ENCODE measurements at regions of chr9 and their contacts with region 1.

Region 1: DNA sequence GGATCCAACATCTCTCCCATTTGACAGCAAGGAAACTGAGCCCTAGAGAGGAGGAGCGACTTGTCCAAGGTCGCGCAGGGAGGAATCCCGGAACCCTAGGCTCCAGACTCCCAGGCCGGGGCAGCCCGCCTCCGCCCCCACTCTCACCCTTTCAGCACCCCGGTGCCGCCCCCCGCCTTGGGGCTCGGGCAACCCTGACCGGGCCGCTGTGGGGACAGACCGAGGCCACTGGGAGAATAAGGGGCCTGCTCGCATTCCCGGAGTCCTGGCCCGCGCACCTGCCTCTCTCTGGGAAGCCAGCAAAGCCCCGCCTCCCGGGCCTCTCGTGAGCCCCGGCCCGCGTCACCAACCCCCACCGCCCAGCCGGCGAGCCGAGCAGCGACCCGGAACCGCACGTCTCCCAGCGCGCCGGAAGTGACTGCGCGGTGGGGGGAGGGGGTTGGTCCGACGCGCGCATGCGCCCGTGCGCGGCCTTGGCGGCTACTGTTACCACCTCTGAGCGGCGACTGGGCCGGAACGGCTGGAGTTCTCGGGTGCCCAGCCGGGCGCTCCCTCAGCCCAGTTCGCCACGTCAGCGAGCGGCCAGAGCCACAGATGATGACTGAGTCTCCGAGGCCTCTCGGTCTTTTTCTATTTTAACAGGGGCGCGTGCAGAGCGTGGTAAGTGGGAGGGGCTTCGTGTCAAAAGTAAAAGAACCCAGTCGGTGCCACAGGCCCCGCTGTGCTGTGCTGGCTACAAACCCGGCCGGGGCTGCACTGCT is at the start of gene GOLGA1:
- DNase-seq: peak; percentile 97 to 98
- ATAC-seq: peak; percentile 100
- H3K4me3 ChIP-seq: peak within 1 kb of the TSS; percentile 85 to 87
- H3K27ac ChIP-seq: peak within 1 kb of the TSS; percentile 89 to 95
- H3K4me1 ChIP-seq: no peaks in the 10 kb centered on the region
- H3K27me3 ChIP-seq: no peaks in the 10 kb centered on the region
- total RNA-seq, gene GOLGA1: 15.0 to 20.4 TPM

Region 2: GRCh38 chr9:124869986-124870560 is 70.8 kb before region 1 on chr9:
- intact Hi-C with region 1: loop called in 1 of 2 experiments (anchors 5 kb)
- DNase-seq: no peak
- ATAC-seq: peak; percentile 5
- H3K4me3 ChIP-seq: peak overlapping the region in 1 of 2 donors; percentile 67
- H3K27ac ChIP-seq: no peak overlapping the region
- H3K4me1 ChIP-seq: no peaks in the 10 kb centered on the region
- H3K27me3 ChIP-seq: no peaks in the 10 kb centered on the region

Region 3: GRCh38 chr9:125143375-125144090 is 202.7 kb after region 1 on chr9 and contains the start of gene SCAI:
- intact Hi-C with region 1: loop called (anchors 2 to 5 kb)
- DNase-seq: peak; percentile 99 to 100
- ATAC-seq: peak; percentile 100
- H3K4me3 ChIP-seq: peak within 1 kb of the TSS; percentile 74 to 88
- H3K27ac ChIP-seq: no peak within 1 kb of the TSS
- H3K4me1 ChIP-seq: no peaks in the 10 kb centered on the region
- H3K27me3 ChIP-seq: no peaks in the 10 kb centered on the region
- total RNA-seq, gene SCAI: 7.9 to 13.9 TPM

Region 4: GRCh38 chr9:125200210-125201047 is 259.6 kb after region 1 on chr9 and contains the start of gene RABEPK:
- intact Hi-C with region 1: loop called in 1 of 2 experiments (anchors 2 kb)
- DNase-seq: peak; percentile 96 to 97
- ATAC-seq: peak; percentile 100
- H3K4me3 ChIP-seq: peak within 1 kb of the TSS; percentile 44 to 97
- H3K27ac ChIP-seq: peak within 1 kb of the TSS; percentile 55 to 95
- H3K4me1 ChIP-seq: no peaks in the 10 kb centered on the region
- H3K27me3 ChIP-seq: no peaks in the 10 kb centered on the region
- total RNA-seq, gene RABEPK: 14.3 to 15.4 TPM

Region 5: DNA sequence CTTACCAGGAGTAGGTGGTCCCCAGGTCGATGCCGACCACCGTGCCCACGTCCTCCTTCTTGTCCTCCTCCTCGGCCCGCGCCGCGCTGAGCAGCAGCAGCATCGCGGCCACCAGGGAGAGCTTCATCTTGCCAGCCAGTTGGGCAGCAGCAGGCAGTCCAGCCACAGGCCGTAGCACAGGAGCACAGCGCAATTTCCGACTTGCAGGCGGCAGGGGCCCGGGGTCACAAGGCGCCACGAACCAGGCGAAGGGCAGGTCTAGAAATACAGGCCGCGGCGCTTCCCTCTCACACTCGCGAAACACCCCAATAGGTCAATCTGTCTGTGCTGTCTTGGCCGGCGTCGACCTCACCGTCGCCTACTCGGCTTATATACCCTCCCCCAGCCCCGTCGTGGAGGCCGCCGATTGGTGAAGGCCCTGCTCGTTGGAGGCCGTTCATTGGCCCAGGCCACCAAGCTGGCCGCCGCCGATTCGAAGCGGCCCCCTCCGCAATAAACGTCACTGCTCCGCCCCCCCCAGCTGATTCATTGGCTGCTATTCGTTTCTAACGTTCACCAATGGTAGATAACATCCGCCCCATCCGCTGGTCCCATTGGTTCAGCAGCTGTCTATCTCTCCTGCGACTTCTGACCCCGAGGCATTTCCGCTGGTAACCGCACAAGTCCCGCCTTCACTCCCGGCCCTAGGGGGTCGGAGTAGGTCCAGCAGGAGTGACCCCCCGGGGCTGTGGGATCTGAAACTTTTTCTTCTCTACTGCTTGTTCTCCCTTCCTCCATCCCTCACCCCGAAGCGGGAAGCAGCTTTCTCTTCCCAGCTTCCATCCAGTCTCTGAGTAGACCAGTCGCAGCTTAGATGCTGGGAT is 300.4 kb after region 1 on chr9 and contains the start of gene HSPA5:
- intact Hi-C with region 1: loop called in 1 of 2 experiments (anchors 5 kb)
- DNase-seq: peak; percentile 100
- ATAC-seq: peak; percentile 99
- H3K4me3 ChIP-seq: peak within 1 kb of the TSS; percentile 54 to 87
- H3K27ac ChIP-seq: peak within 1 kb of the TSS; percentile 85 to 88
- H3K4me1 ChIP-seq: peaks cover 0 to 2% of the 10 kb centered on the region in 2 donors
- H3K27me3 ChIP-seq: no peaks in the 10 kb centered on the region
- total RNA-seq, gene HSPA5: 195 to 260 TPM